HEK293T (cell line): ENCODE measurements at regions of chr22 and their contacts with region 1.

Region 1: GRCh38 chr22:30356449-30357235 is at the starts of genes CCDC157 and SF3A1:
- DNase-seq: peak; percentile 97

Region 2: GRCh38 chr22:30289134-30289979 is 67.3 kb before region 1 on chr22 and contains the start of gene CASTOR1:
- CTCF ChIA-PET with region 1: interaction called, 7 read pairs
- POLR2A ChIA-PET with region 1: interaction called, 16 read pairs
- DNase-seq: peak; percentile 100

Region 3: GRCh38 chr22:30332561-30332960 is 24.1 kb before region 1 on chr22:
- CTCF ChIA-PET with region 1: no interaction called
- POLR2A ChIA-PET with region 1: interaction called, 31 read pairs
- DNase-seq: no peak

Region 4: GRCh38 chr22:30368431-30368830 is 11.8 kb after region 1 on chr22:
- CTCF ChIA-PET with region 1: no interaction called
- POLR2A ChIA-PET with region 1: interaction called, 31 read pairs
- DNase-seq: no peak

Region 5: GRCh38 chr22:30381264-30381663 is 24.6 kb after region 1 on chr22:
- CTCF ChIA-PET with region 1: no interaction called
- POLR2A ChIA-PET with region 1: interaction called, 11 read pairs
- DNase-seq: no peak

Region 6: DNA sequence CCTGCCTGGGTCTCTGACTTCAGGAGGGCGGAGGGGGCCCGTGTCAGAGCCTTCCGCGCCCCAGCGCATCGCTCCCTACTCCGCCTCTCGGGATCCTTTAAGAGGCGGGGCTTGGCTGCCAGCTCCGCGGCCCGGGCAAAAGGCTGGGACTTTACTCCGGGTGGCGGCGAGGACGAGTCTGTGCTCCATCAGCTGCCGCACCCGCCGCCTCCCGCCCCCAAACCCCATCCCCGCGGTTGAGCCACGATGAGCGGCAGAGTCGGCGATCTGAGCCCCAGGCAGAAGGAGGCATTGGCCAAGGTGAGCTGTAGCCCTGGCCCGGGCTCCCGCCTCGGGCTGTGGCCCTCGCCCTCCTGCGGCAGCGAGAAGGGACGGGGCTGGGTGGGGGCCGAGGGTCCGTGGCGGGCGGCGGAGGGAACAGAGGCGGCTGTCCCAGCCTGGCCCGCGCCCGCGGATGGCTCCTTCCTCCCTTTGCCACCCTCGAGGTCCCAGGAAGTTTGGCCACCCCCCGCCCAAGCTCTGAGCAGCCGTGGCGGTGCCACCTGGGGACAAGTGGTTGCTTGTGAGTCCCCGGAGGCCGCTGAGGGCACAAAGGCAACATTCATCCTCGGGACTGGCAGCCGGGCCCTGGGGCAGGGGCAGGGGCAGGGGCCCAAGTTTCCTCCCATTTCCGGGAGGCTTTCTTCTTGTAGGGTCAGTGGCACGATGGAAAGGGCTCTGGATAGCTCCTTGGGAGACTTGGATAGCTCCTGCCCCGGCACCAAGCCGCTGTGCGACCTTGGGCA is 40.4 kb after region 1 on chr22 and contains the start of gene SEC14L2:
- CTCF ChIA-PET with region 1: no interaction called
- POLR2A ChIA-PET with region 1: interaction called, 16 read pairs
- DNase-seq: peak; percentile 74

Region 7: GRCh38 chr22:30649430-30650007 is 292.9 kb after region 1 on chr22:
- CTCF ChIA-PET with region 1: no interaction called
- POLR2A ChIA-PET with region 1: no interaction called
- DNase-seq: no peak